ENCODE measurements at regions of chr9 and their contacts with region 1.

Region 1: DNA sequence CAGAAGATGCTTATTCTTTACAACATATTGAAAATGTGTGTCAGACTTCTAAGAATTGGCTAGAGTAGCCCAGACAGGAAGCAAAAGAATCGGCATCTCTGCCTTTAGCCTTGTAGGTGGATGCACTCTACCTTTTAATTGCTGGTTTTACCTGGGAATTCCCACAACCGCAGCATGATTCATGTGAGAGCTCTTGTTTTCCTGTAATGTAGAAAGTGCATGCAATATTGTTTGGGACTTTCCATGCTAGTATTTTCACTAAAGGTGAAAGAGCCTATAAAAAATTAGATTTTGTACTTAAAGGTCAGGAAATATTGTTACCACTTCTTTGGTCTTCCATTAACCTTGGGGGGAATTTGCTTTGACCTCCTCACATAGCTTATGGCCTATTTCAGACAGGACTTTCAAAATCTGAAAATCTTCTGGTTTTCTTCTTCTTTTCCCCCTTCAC is 89.8 kb downstream of the NTRK2 start:
- DNase-seq: peak; percentile 81
- ATAC-seq: peak; percentile 78
- H3K4me3 ChIP-seq: peak overlapping the region; percentile 4; the same call in 1 of the 2 replicates
- H3K27ac ChIP-seq: peak overlapping the region; percentile 82
- H3K4me1 ChIP-seq: peaks cover 24% of the 10 kb centered on the region
- H3K27me3 ChIP-seq: no peaks in the 10 kb centered on the region
- CTCF ChIP-seq: no peak
- EP300 ChIP-seq: peak; percentile 96
- POLR2A ChIP-seq: no peak
- RAD21 ChIP-seq: no peak

Region 2: DNA sequence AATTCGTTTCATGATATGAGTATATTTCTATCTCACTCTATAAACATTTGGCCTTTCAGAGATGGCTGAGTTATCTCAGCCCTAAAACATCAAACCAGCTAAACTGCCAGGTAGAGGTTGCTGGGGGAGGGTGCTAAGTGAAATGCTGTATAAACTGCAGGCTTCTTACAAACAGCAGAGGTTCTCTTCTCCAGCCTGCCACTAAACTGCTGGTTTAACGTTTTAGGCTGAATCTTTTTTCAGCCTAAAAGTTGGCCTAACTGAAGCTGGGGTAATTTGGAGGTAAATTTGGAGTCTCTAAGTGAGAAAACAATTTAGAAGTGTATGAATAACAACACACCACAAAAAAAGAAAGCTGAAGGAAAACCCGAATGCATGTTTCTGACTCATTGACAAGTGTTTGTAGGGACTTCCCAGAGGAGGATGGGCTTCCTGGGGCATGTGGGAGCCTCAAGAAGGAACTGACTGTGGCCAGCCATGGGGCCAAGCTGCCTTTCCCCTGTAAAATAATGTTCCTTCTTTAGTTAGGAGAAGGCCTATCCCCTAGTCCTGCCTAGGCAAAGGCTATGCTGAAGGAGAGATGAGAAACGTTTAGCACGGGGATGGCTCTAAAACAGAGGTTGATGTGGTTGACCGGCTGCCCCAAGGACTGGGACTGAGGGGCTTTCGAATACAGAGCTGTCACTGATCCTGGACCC is 463.0 kb before region 1 on chr9:
- CTCF ChIA-PET with region 1: no interaction called
- POLR2A ChIA-PET with region 1: no interaction called
- RAD21 ChIA-PET with region 1: no interaction called
- SMC1A ChIA-PET with region 1: no interaction called
- in situ Hi-C with region 1: no loop called
- intact Hi-C with region 1: loop called (anchors 10 kb)
- DNase-seq: peak; percentile 66
- ATAC-seq: peak; percentile 80
- H3K4me3 ChIP-seq: no peak overlapping the region
- H3K27ac ChIP-seq: peak overlapping the region; percentile 86
- H3K4me1 ChIP-seq: peaks cover 46% of the 10 kb centered on the region
- H3K27me3 ChIP-seq: no peaks in the 10 kb centered on the region
- CTCF ChIP-seq: no peak
- EP300 ChIP-seq: peak; percentile 63 to 70; a peak in 3 of 4 replicates
- POLR2A ChIP-seq: 0 out of 2 replicates have a peak, but pooled peaks have one; percentile 18
- RAD21 ChIP-seq: no peak

Region 3: DNA sequence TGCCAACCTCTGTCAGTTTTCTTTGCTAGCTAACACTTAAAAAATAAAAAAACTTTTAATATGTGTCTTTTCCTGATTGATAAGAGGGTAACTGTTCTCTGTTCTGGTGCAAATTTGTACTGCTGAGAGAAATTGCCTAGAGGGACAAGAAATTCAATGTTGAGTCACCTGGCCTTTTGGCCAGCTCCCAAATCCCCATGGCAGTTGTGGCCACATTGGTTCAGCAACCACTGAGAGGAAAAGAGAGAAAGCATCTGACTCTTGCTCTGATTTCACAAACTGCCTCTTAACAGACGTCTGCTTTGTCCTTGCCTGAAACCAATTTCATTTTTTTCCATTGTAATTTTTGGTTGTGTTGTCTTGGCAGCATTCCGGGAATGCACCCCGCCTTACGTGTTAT is 47.4 kb before region 1 on chr9:
- CTCF ChIA-PET with region 1: interaction called, 4 read pairs
- POLR2A ChIA-PET with region 1: interaction called, 10 read pairs
- RAD21 ChIA-PET with region 1: interaction called, 16 read pairs
- SMC1A ChIA-PET with region 1: interaction called, 40 read pairs
- in situ Hi-C with region 1: loop called (anchors 10 kb)
- intact Hi-C with region 1: no loop called
- DNase-seq: no peak
- ATAC-seq: peak; percentile 51
- H3K4me3 ChIP-seq: no peak overlapping the region
- H3K27ac ChIP-seq: no peak overlapping the region
- H3K4me1 ChIP-seq: peaks cover 11% of the 10 kb centered on the region; the same call in 1 of the 2 replicates
- H3K27me3 ChIP-seq: no peaks in the 10 kb centered on the region
- CTCF ChIP-seq: no peak
- EP300 ChIP-seq: no peak; a peak in 1 of 4 replicates
- POLR2A ChIP-seq: no peak
- RAD21 ChIP-seq: no peak

Region 4: DNA sequence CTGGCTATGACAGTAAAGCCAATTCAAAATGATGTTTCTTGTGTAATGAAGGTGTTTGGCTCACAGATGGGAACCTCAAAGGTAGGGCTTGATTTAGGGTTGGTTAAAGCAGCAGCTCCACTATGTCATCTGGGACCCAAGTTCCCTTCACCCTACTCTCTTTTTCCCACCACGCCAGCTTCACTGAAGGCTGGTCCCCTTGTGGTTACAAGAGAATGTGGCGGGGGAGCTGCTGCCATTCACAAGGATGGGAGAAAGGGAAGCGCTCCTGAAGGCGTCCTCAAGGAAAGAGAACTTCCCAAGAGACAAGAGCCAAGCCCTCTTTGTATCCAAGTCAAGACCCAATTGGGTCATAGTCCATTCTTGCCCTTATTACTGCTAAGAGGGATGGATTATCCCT is 17.1 kb before region 1 on chr9:
- CTCF ChIA-PET with region 1: interaction called, 14 read pairs
- POLR2A ChIA-PET with region 1: interaction called, 5 read pairs
- RAD21 ChIA-PET with region 1: interaction called, 13 read pairs
- SMC1A ChIA-PET with region 1: interaction called, 61 read pairs
- in situ Hi-C with region 1: no loop called
- intact Hi-C with region 1: loop called (anchors 1 kb)
- DNase-seq: no peak
- ATAC-seq: no peak
- H3K4me3 ChIP-seq: no peak overlapping the region
- H3K27ac ChIP-seq: no peak overlapping the region
- H3K4me1 ChIP-seq: peaks cover 11% of the 10 kb centered on the region
- H3K27me3 ChIP-seq: no peaks in the 10 kb centered on the region
- CTCF ChIP-seq: no peak
- EP300 ChIP-seq: no peak
- POLR2A ChIP-seq: no peak
- RAD21 ChIP-seq: no peak

Region 5: GRCh38 chr9:84748112-84748511 is 11.2 kb before region 1 on chr9:
- CTCF ChIA-PET with region 1: interaction called, 14 read pairs
- POLR2A ChIA-PET with region 1: interaction called, 9 read pairs
- RAD21 ChIA-PET with region 1: interaction called, 13 read pairs
- SMC1A ChIA-PET with region 1: interaction called, 61 read pairs
- in situ Hi-C with region 1: no loop called
- intact Hi-C with region 1: loop called (anchors 1 kb)
- DNase-seq: peak; percentile 66
- ATAC-seq: peak; percentile 73
- H3K4me3 ChIP-seq: no peak overlapping the region; the same call in 1 of the 2 replicates
- H3K27ac ChIP-seq: peak overlapping the region; percentile 73
- H3K4me1 ChIP-seq: peaks cover 42% of the 10 kb centered on the region
- H3K27me3 ChIP-seq: no peaks in the 10 kb centered on the region
- CTCF ChIP-seq: no peak
- EP300 ChIP-seq: peak; percentile 51 to 71; a peak in 2 of 4 replicates
- POLR2A ChIP-seq: no peak
- RAD21 ChIP-seq: no peak

Region 6: GRCh38 chr9:84773022-84773421 is 13.7 kb after region 1 on chr9:
- CTCF ChIA-PET with region 1: interaction called, 7 read pairs
- POLR2A ChIA-PET with region 1: interaction called, 5 read pairs
- RAD21 ChIA-PET with region 1: interaction called, 101 read pairs
- SMC1A ChIA-PET with region 1: interaction called, 204 read pairs
- in situ Hi-C with region 1: no loop called
- intact Hi-C with region 1: loop called (anchors 2 kb)
- DNase-seq: no peak
- ATAC-seq: no peak
- H3K4me3 ChIP-seq: no peak overlapping the region
- H3K27ac ChIP-seq: no peak overlapping the region
- H3K4me1 ChIP-seq: peaks cover 4% of the 10 kb centered on the region
- H3K27me3 ChIP-seq: no peaks in the 10 kb centered on the region
- CTCF ChIP-seq: no peak
- EP300 ChIP-seq: no peak
- POLR2A ChIP-seq: no peak
- RAD21 ChIP-seq: no peak

Measured in GM12878 (cell line).